CD4-positive, alpha-beta memory T cell (primary cell): ENCODE measurements at regions of chr5 and their contacts with region 1.

Region 1: DNA sequence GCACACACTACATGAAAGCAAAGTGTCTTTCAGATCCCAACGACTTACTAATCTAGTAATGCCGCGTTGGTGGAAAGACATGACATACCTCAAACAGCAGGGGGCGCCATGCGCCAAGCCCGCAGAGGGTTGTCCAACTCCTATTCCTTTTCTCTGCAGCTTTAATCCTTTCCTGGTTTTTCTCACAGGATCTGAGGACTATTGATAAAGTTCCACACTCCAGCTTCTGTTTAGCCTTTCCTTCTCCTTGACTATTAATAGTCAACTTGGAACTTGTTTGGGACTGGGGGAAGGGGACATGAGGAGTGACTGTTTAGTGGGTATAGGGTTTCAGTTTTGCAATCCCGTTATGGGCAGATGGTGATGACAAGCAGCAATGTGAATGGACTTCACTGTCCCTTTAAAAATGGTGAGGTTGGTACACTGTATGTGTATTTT is 62.9 kb downstream of the OTULIN start:
- DNase-seq: peak; percentile 66 to 75 (median 71)
- H3K4me3 ChIP-seq: no peak overlapping the region
- H3K4me3 Mint-ChIP-seq: no peak overlapping the region
- H3K27ac ChIP-seq: no peak overlapping the region
- H3K27ac Mint-ChIP-seq: peak overlapping the region in 4 of 7 donors; percentile 47 to 75 (median 60)
- H3K4me1 ChIP-seq: no peaks in the 10 kb centered on the region
- H3K4me1 Mint-ChIP-seq: peaks cover 8 to 15% (median 13%) of the 10 kb centered on the region in 4 donors
- H3K27me3 ChIP-seq: no peaks in the 10 kb centered on the region
- H3K27me3 Mint-ChIP-seq: no peaks in the 10 kb centered on the region

Region 2: DNA sequence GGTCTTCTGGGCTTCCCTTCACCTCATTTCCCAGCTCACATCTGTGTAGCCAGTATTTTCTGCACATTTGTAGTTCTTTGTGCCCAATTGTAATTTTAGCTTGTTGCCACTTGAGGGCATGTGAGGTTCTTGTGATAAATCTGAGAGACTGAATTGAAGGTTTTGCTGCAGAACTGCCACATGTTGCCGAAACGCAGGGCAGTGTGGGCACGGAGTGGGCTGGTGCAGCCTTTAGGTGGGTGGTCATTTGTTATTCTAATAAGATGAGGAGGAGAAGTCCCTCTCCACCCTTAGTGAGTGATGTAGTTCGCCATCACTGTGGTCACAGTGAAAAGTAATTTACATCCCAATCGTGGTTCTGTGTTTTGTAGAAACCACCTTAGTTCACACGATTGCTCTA is 41.7 kb before region 1 on chr5:
- CTCF ChIA-PET with region 1: interaction called, 96 read pairs
- POLR2A ChIA-PET with region 1: interaction called, 3 read pairs
- intact Hi-C with region 1: loop called (anchors 1 kb)
- DNase-seq: peak; percentile 52 to 63 (median 57)
- H3K4me3 ChIP-seq: no peak overlapping the region
- H3K4me3 Mint-ChIP-seq: peak overlapping the region; percentile 38 to 86 (median 67)
- H3K27ac ChIP-seq: no peak overlapping the region
- H3K27ac Mint-ChIP-seq: peak overlapping the region in 6 of 7 donors; percentile 8 to 97 (median 64)
- H3K4me1 ChIP-seq: peaks cover 7% of the 10 kb centered on the region
- H3K4me1 Mint-ChIP-seq: peaks cover 7 to 12% (median 11%) of the 10 kb centered on the region in 4 donors
- H3K27me3 ChIP-seq: no peaks in the 10 kb centered on the region
- H3K27me3 Mint-ChIP-seq: no peaks in the 10 kb centered on the region

Region 3: DNA sequence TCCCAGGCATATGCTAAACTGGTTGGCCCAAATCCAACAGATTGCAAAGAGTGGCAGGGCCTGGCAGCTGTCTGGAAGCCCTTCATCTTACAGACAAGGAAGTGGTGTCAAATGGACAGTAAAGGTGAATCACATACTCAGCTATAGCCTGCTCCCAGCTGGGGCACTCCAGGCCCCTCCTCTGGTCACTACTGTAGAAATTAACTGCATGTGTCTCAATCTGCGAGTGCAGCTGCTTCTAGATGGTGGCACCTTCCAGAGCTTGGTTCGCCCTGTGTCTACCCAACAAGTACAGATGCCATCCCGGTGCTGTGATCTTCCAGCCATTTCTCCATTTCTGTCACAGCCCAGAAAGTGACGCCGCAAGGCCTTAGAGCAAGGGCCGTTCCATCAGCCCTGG is 12.7 kb before region 1 on chr5:
- CTCF ChIA-PET with region 1: interaction called, 64 read pairs
- POLR2A ChIA-PET with region 1: no interaction called
- intact Hi-C with region 1: no loop called
- DNase-seq: no peak
- H3K4me3 ChIP-seq: no peak overlapping the region
- H3K4me3 Mint-ChIP-seq: no peak overlapping the region
- H3K27ac ChIP-seq: no peak overlapping the region
- H3K27ac Mint-ChIP-seq: peak overlapping the region in 4 of 7 donors; percentile 12 to 63 (median 24)
- H3K4me1 ChIP-seq: no peaks in the 10 kb centered on the region
- H3K4me1 Mint-ChIP-seq: peaks cover 13 to 26% (median 18%) of the 10 kb centered on the region in 4 donors
- H3K27me3 ChIP-seq: no peaks in the 10 kb centered on the region
- H3K27me3 Mint-ChIP-seq: no peaks in the 10 kb centered on the region

Region 4: GRCh38 chr5:14871210-14872069 is 144.0 kb after region 1 on chr5 and contains the start of gene ANKH:
- CTCF ChIA-PET with region 1: interaction called, 14 read pairs
- POLR2A ChIA-PET with region 1: no interaction called
- intact Hi-C with region 1: loop called (anchors 1 kb)
- DNase-seq: peak; percentile 77 to 89 (median 87)
- H3K4me3 ChIP-seq: peak within 1 kb of the TSS; percentile 74 to 76
- H3K4me3 Mint-ChIP-seq: peak within 1 kb of the TSS; percentile 94 to 99 (median 98)
- H3K27ac ChIP-seq: peak within 1 kb of the TSS; percentile 67
- H3K27ac Mint-ChIP-seq: peak within 1 kb of the TSS; percentile 96 to 98 (median 97)
- H3K4me1 ChIP-seq: peaks cover 22% of the 10 kb centered on the region
- H3K4me1 Mint-ChIP-seq: peaks cover 29 to 46% (median 33%) of the 10 kb centered on the region in 4 donors
- H3K27me3 ChIP-seq: no peaks in the 10 kb centered on the region
- H3K27me3 Mint-ChIP-seq: no peaks in the 10 kb centered on the region
- total RNA-seq, gene ANKH: 161 to 165 TPM

Region 5: DNA sequence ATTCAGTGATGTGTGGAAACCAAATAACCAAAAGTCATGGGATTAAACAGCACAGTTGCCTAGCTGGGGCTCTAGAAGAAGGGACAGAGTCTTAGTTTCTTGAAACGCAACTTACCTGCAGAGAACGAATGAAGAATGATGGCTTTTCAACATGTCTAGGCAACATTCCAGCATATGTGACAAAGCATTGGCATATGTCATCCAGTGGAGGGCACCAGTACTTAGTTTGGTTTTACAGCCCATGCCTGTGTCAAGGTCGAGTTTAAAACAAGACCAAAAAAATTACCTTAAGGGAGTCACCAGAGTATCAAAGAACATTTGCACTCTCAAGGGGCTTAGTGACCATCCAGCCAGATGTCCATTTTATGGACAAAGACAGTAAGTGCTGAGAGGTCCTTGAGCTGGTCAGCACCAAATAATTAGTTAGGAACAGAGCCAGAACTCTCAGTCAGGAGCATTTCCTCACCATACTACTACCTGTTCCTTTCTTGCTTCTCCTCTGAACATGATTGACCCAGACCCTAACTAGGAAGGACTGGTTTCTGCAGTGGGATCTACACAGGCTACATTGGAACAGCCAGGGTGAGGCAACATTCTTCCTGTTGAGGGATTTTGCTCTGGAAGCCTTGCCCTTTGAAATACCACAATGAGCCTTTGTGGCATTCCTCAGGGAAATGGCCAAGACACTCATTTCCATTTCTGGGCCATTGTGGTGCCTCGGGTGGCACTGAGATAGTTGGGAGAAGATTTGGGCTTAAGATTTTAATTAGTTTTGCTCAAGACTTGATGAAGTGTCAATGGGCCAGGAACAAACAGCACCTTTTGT is 219.6 kb after region 1 on chr5:
- CTCF ChIA-PET with region 1: interaction called, 10 read pairs
- POLR2A ChIA-PET with region 1: no interaction called
- intact Hi-C with region 1: loop called (anchors 1 kb)
- DNase-seq: peak in 4 of 5 donors; percentile 45 to 57 (median 50)
- H3K4me3 ChIP-seq: no peak overlapping the region
- H3K4me3 Mint-ChIP-seq: no peak overlapping the region
- H3K27ac ChIP-seq: no peak overlapping the region
- H3K27ac Mint-ChIP-seq: peak overlapping the region in 2 of 7 donors; percentile 2 to 54
- H3K4me1 ChIP-seq: no peaks in the 10 kb centered on the region
- H3K4me1 Mint-ChIP-seq: peaks cover 0 to 5% (median 2%) of the 10 kb centered on the region in 4 donors
- H3K27me3 ChIP-seq: no peaks in the 10 kb centered on the region
- H3K27me3 Mint-ChIP-seq: peaks cover 3% of the 10 kb centered on the region in 2 donors

Region 6: DNA sequence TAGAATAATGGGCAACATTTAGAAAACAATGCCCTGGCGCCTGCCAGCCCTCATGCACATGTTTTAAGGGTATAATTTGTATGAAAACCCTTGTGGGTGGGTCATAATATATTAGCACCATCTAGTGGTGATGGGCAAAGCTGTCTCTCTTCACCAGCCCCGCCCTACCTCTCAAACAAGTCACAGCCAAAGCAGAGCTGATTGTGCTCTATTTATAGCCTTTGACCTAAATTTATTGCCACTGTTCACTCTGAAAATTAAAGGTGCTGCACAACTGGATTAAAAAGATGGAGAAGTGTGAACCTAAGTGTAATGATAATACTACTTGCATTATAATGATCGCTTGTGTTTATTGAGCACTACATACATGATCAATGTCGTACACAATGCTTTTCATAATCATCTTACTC is 276.1 kb after region 1 on chr5:
- CTCF ChIA-PET with region 1: interaction called, 134 read pairs
- POLR2A ChIA-PET with region 1: interaction called, 4 read pairs
- intact Hi-C with region 1: loop called (anchors 1 kb)
- DNase-seq: peak; percentile 68 to 73 (median 70)
- H3K4me3 ChIP-seq: no peak overlapping the region
- H3K4me3 Mint-ChIP-seq: no peak overlapping the region
- H3K27ac ChIP-seq: no peak overlapping the region
- H3K27ac Mint-ChIP-seq: no peak overlapping the region
- H3K4me1 ChIP-seq: no peaks in the 10 kb centered on the region
- H3K4me1 Mint-ChIP-seq: peaks cover 0 to 3% (median 1%) of the 10 kb centered on the region in 4 donors
- H3K27me3 ChIP-seq: no peaks in the 10 kb centered on the region
- H3K27me3 Mint-ChIP-seq: peaks cover 2 to 4% of the 10 kb centered on the region in 2 donors